ENCODE measurements at regions of chr4 and their contacts with region 1.

Region 1: GRCh38 chr4:781493-782216 is 44.3 kb downstream of the CPLX1 start:
- DNase-seq: peak; percentile 96
- H3K4me3 ChIP-seq: peak overlapping the region; percentile 99
- H3K27me3 ChIP-seq: peaks cover 2% of the 10 kb centered on the region; the same call in 1 of the 2 replicates
- CTCF ChIP-seq: no peak

Region 2: DNA sequence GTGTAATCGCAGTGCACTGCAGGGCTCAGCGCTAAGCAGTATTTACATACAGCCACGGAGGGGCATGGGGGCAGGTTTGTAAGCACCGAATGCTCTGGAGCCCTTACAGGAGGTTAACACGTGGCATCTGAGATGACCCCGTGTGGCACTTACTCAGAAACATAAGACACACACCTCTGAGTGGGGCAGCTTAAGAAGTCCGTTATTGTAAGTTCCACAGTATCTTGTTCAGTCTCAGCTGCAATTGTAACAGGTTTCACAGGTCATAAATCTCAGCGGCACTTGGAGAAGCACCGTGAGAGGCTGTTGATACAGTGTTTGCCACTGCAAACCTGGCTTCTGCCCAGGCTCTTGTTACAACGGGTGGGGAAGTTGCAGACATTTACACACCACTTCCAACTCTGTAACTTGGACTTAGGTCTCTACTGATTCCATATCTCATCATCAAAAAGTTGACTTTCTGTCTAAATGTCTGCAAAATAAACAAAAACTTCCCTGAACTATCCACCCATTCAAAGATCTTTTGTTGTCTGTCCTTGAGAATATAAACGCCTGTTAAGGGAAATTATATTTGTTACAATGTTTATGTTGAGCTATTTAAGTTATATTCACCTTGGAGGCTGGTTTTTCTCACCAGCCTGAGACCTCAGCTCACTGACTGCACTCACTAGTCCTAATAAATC is 34.0 kb after region 1 on chr4:
- CTCF ChIA-PET with region 1: no interaction called
- POLR2A ChIA-PET with region 1: no interaction called
- DNase-seq: no peak
- H3K4me3 ChIP-seq: no peak overlapping the region
- H3K27me3 ChIP-seq: peaks cover 15% of the 10 kb centered on the region
- CTCF ChIP-seq: no peak

Region 3: DNA sequence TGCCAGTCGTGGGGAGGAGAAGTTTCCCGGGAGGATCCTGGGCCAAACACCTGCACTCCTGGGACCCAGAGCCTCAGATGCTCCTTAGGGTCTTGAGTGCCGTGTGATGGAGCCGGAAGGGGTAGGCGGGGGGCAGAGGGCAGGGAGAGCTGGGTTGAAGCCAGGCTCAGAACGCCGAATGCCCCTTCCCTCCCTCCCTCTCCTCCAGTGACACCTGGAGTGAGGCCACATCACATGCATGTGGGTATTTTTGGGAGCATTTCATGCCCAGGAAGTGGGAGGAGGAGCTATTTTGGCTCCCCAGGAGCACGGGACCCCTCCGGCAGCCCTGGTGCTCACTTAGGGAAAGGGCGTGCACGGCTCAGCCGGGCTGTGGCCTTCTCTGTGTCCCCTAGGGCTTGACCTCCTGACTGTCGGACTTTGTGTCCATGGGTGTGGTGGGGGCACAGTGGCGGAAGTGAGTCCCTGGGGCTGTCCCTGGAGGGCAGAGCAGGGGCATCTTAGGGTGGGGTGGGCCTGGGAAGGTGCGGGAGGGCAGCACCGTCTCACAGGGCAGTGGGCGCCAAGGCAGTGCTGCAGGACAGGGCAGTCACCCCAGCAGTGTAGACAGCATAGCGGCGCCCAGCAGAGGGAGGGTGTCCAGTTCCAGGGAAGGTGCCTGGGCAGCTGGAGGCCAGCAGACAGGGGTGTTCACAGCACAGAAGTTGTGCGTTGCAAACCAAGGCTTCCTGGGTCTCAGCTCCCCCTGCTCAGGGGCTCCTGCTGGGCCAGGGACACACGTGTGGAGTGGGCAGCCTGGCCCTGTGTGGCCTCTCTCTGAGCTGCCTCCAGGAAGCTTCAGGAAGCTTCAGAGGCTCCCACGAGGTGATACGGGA is 49.2 kb after region 1 on chr4:
- CTCF ChIA-PET with region 1: no interaction called
- POLR2A ChIA-PET with region 1: interaction called, 11 read pairs
- DNase-seq: no peak
- H3K4me3 ChIP-seq: no peak overlapping the region
- H3K27me3 ChIP-seq: peaks cover 18% of the 10 kb centered on the region
- CTCF ChIP-seq: no peak

Measured in BJ (cell line).